Activated naive CD4-positive, alpha-beta T cell treated with anti-CD3 and anti-CD28 coated beads for 36 hours (primary cell): ENCODE measurements at regions of chr1 and their contacts with region 1.

Region 1: GRCh38 chr1:105793536-105794146 is 1262.8 kb upstream of the PRMT6 start:
- DNase-seq: peak; percentile 51
- H3K4me3 Mint-ChIP-seq: no peak overlapping the region
- H3K27ac Mint-ChIP-seq: no peak overlapping the region
- H3K4me1 Mint-ChIP-seq: no peaks in the 10 kb centered on the region
- H3K27me3 Mint-ChIP-seq: no peaks in the 10 kb centered on the region

Region 2: GRCh38 chr1:104648269-104648691 is 1145.4 kb before region 1 on chr1:
- CTCF ChIA-PET with region 1: no interaction called
- intact Hi-C with region 1: loop called (anchors 2 kb)
- DNase-seq: no peak
- H3K4me3 Mint-ChIP-seq: no peak overlapping the region
- H3K27ac Mint-ChIP-seq: no peak overlapping the region
- H3K4me1 Mint-ChIP-seq: no peaks in the 10 kb centered on the region
- H3K27me3 Mint-ChIP-seq: no peaks in the 10 kb centered on the region

Region 3: GRCh38 chr1:104780470-104781078 is 1013.1 kb before region 1 on chr1:
- CTCF ChIA-PET with region 1: no interaction called
- intact Hi-C with region 1: loop called (anchors 1 kb)
- DNase-seq: peak; percentile 6
- H3K4me3 Mint-ChIP-seq: no peak overlapping the region
- H3K27ac Mint-ChIP-seq: no peak overlapping the region
- H3K4me1 Mint-ChIP-seq: no peaks in the 10 kb centered on the region
- H3K27me3 Mint-ChIP-seq: no peaks in the 10 kb centered on the region